HCT116 (cell line): ENCODE measurements at regions of chr12 and their contacts with region 1.

Region 1: GRCh38 chr12:91178139-91178561 is 4.5 kb downstream of the DCN start:
- DNase-seq: no peak
- ATAC-seq: peak; percentile 60
- H3K4me3 ChIP-seq: no peak overlapping the region
- H3K27ac ChIP-seq: no peak overlapping the region
- H3K4me1 ChIP-seq: no peaks in the 10 kb centered on the region
- H3K27me3 ChIP-seq: no peaks in the 10 kb centered on the region
- CTCF ChIP-seq: peak; percentile 30 to 36 (median 32); a peak in 3 of 6 replicates
- POLR2A ChIP-seq: no peak
- RAD21 ChIP-seq: peak; percentile 53

Region 2: DNA sequence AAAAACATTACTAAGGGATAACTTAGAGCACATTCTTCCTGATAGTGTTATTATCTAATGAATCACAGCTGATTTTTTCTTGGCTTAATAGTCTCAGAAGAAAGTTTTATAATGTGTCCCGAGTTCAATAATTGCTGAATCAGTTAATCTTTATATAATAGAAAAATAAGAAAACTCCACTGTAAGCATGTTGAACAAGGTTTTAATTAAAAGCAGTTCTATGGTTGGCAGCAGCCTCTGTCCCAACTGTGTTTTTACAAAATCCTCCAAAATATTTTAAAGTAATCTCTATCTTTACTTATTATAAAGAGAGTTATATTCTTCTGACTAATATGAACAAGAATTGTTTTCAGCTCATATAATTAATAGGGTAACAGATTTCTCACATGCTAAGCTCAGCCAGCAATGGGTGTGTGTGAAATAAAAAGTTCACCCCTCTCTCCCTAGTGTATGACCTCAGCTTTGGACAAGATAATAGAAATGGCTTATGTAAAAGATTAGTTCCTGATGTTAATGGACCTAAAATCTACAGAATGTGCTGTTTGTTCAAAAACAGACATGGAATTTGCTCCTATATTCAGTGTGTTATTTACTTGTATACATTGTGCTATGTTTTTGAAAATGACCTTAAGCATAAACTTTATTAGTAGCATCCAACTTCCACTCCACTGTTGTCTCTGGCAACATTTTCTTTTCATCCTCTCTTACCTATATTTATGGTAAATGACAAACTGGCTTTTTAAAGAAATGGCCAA is 71.5 kb after region 1 on chr12:
- CTCF ChIA-PET with region 1: no interaction called
- POLR2A ChIA-PET with region 1: no interaction called
- RAD21 ChIA-PET with region 1: no interaction called
- intact Hi-C with region 1: loop called (anchors 5 kb)
- DNase-seq: no peak
- ATAC-seq: no peak
- H3K4me3 ChIP-seq: no peak overlapping the region
- H3K27ac ChIP-seq: no peak overlapping the region
- H3K4me1 ChIP-seq: no peaks in the 10 kb centered on the region
- H3K27me3 ChIP-seq: no peaks in the 10 kb centered on the region
- CTCF ChIP-seq: no peak
- POLR2A ChIP-seq: no peak
- RAD21 ChIP-seq: no peak

Region 3: DNA sequence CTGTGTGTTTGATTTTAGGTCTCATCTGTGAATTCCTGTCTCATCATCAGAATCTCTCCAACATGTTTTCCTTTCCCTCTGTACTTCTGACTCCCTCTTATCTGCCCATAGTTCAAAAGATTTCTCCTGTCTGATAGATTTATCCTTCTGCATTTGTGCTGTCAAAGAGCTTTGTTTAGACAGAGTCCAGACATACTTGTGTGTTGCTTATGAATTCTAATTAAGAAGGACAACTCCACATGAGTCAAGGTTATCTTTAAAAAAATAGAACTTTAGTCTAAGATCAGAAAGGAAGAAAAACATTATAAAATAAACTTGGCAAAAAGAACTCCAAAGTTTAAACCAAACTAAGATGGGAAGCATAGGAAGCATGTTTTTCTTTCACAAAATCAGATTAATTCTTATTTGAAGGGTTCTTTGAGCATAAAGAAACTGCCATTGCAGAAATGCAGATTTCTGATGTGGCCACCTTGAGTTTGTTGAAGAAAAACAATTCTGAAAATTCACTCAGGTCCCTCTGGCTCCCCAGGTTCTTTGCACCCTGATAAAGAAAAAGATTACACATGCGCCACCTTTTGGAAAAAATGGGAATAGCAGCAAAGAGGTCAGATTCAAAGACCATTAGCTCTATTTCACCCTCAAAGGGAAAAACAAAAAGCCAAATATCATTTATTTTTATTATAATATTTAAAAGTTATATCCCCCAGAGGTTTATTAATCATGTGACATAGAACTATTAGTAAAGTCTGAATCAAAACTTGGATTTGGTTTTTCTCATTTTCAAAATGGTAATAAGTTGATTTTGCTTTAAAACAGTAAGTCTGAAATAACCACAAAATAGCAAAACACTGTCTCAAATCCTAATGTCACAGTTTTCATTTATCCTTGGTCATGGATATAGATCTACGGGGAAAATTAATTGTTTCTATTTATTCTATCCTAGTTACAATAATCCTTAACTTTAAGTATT is 148.2 kb after region 1 on chr12:
- CTCF ChIA-PET with region 1: interaction called, 7 read pairs
- POLR2A ChIA-PET with region 1: no interaction called
- RAD21 ChIA-PET with region 1: no interaction called
- intact Hi-C with region 1: loop called (anchors 10 kb)
- DNase-seq: peak; percentile 19
- ATAC-seq: peak; percentile 55
- H3K4me3 ChIP-seq: no peak overlapping the region
- H3K27ac ChIP-seq: no peak overlapping the region
- H3K4me1 ChIP-seq: no peaks in the 10 kb centered on the region
- H3K27me3 ChIP-seq: no peaks in the 10 kb centered on the region
- CTCF ChIP-seq: peak; percentile 60 to 70 (median 66); a peak in 5 of 6 replicates
- POLR2A ChIP-seq: no peak
- RAD21 ChIP-seq: peak; percentile 64